PC-9 (cell line): ENCODE measurements at regions of chr6 and their contacts with region 1.

Region 1: DNA sequence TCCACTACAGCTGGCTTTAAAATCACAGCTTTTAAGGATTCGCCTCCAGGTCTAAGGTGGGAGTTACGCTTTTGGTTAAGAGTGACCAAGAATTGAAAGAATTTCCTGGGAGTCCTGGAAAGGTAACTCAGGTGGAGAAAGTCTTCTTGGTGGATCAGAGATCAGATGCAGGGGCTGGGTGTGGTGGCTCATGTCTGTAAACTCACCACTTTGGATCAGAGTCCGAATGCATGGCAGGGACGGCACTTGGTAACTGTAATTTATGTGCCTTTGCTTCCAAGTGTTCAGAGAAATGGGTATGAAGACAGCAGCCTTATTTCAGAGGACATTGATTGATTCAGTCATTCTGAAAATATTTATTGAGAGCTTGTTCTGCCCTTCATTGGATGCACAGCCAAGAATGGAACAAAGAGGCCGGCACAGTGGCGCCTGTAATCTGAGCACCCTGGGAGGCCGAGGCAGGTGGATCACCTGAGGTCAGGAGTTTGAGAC is 18.0 kb upstream of the JARID2 start:
- DNase-seq: no peak
- H3K4me3 ChIP-seq: no peak overlapping the region
- H3K27ac ChIP-seq: no peak overlapping the region
- H3K4me1 ChIP-seq: no peaks in the 10 kb centered on the region
- H3K27me3 ChIP-seq: no peaks in the 10 kb centered on the region
- CTCF ChIP-seq: no peak

Region 2: GRCh38 chr6:14630016-14630415 is 597.9 kb before region 1 on chr6:
- CTCF ChIA-PET with region 1: no interaction called
- POLR2A ChIA-PET with region 1: no interaction called
- intact Hi-C with region 1: no loop called
- DNase-seq: no peak
- H3K4me3 ChIP-seq: no peak overlapping the region
- H3K27ac ChIP-seq: no peak overlapping the region
- H3K4me1 ChIP-seq: no peaks in the 10 kb centered on the region
- H3K27me3 ChIP-seq: no peaks in the 10 kb centered on the region
- CTCF ChIP-seq: no peak

Region 3: GRCh38 chr6:15170126-15170525 is 57.7 kb before region 1 on chr6:
- CTCF ChIA-PET with region 1: interaction called, 10 read pairs
- POLR2A ChIA-PET with region 1: no interaction called
- intact Hi-C with region 1: no loop called
- DNase-seq: no peak
- H3K4me3 ChIP-seq: no peak overlapping the region
- H3K27ac ChIP-seq: no peak overlapping the region
- H3K4me1 ChIP-seq: no peaks in the 10 kb centered on the region
- H3K27me3 ChIP-seq: no peaks in the 10 kb centered on the region
- CTCF ChIP-seq: no peak